Prostate gland (tissue), 2 donors: ENCODE measurements at regions of chr18 and their contacts with region 1.

Region 1: DNA sequence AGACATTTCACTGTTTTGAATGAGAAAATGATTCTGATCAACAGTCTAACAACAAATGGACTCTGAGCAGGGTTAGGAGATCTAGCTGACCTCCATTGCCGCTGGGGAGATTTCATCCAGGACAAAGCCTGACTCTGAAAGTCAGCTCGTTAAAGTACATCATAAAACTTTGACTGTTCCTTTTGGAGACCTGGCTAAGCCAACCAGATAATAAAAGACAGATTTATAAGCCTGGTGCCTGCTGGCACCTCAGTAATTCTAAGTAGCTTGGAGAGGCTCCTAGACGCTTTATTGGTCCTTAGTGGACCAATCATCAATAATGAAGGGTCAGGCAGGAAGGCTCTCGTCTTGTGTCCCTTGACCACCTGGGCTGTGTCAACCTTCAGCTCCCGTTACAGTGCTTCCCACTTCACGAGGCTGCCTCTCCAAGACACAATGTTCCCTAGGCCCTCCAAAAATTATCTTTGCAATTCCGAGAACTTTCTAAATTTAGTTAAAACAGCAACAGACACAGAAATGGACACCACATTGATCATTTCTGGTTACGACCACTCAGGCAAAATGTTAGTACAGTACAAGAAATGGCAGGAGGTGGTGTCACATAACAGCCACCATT is 47.9 kb upstream of the PMAIP1 start:
- DNase-seq: peak; percentile 12
- H3K4me3 ChIP-seq: no peak overlapping the region
- H3K27ac ChIP-seq: peak overlapping the region; percentile 14 to 42
- H3K4me1 ChIP-seq: no peaks in the 10 kb centered on the region
- H3K27me3 ChIP-seq: no peaks in the 10 kb centered on the region
- CTCF ChIP-seq: no peak
- POLR2A ChIP-seq: no peak

Region 2: GRCh38 chr18:59814891-59815290 is 37.0 kb before region 1 on chr18:
- intact Hi-C with region 1: no loop called
- DNase-seq: no peak
- H3K4me3 ChIP-seq: no peak overlapping the region
- H3K27ac ChIP-seq: no peak overlapping the region
- H3K4me1 ChIP-seq: no peaks in the 10 kb centered on the region
- H3K27me3 ChIP-seq: no peaks in the 10 kb centered on the region
- CTCF ChIP-seq: no peak
- POLR2A ChIP-seq: no peak

Region 3: GRCh38 chr18:59899298-59900221 is 47.7 kb after region 1 on chr18 and contains the start of gene PMAIP1:
- intact Hi-C with region 1: loop called (anchors 2 kb)
- DNase-seq: peak; percentile 92
- H3K4me3 ChIP-seq: peak within 1 kb of the TSS; percentile 50 to 52
- H3K27ac ChIP-seq: peak within 1 kb of the TSS; percentile 84 to 95
- H3K4me1 ChIP-seq: no peaks in the 10 kb centered on the region
- H3K27me3 ChIP-seq: no peaks in the 10 kb centered on the region
- CTCF ChIP-seq: no peak
- POLR2A ChIP-seq: peak; percentile 90
- total RNA-seq, gene PMAIP1: 2.1 to 4.1 TPM